Activated T-helper 1 cell treated with anti-CD3 and anti-CD28 coated beads, Interleukin-12 subunit alpha, Interleukin-12 subunit beta, Interleukin-2, Interleukin-4 antibody, amounts not matched to agents 30 ng/mL and 10 ng/mL and 1 ng/mL, durations not matched to agents 14 hours and 24 hours and 36 hours (primary cell): ENCODE measurements at regions of chr2 and their contacts with region 1.

Region 1: GRCh38 chr2:68925295-68925896 is 27.3 kb downstream of the GKN2 start:
- DNase-seq: peak; percentile 34
- H3K4me3 Mint-ChIP-seq: no peak overlapping the region
- H3K27ac Mint-ChIP-seq: no peak overlapping the region
- H3K4me1 Mint-ChIP-seq: peaks cover 12% of the 10 kb centered on the region
- H3K27me3 Mint-ChIP-seq: peaks cover 18% of the 10 kb centered on the region

Region 2: GRCh38 chr2:68487773-68488355 is 437.5 kb before region 1 on chr2:
- intact Hi-C with region 1: loop called (anchors 1 kb)
- DNase-seq: no peak
- H3K4me3 Mint-ChIP-seq: no peak overlapping the region
- H3K27ac Mint-ChIP-seq: no peak overlapping the region
- H3K4me1 Mint-ChIP-seq: peaks cover 6% of the 10 kb centered on the region
- H3K27me3 Mint-ChIP-seq: peaks cover 4% of the 10 kb centered on the region

Region 3: DNA sequence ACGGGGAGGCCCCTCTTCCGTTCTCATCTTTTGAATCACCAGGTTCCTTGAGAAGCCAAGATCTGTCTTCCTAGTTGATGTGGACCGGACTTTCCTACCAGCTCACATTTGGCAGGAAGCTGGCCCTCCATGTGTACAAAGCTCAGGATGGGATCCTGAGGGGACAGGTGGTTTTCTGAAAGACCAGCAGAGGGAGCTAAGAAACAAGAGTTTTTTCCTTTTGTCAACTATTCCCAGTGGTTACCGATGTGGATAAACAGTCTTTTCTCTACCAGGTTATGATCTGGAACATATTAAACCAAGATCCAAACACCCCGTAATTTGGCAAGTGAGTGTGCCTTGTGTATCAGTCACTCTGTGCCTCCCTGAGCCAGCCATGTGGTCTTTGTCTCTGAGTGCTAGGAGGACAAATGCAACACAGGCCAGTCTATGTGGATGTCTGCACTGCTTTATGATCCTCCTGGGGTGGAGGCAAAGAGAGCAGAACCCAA is 215.9 kb before region 1 on chr2:
- intact Hi-C with region 1: loop called (anchors 1 kb)
- DNase-seq: no peak
- H3K4me3 Mint-ChIP-seq: no peak overlapping the region
- H3K27ac Mint-ChIP-seq: no peak overlapping the region
- H3K4me1 Mint-ChIP-seq: peaks cover 36% of the 10 kb centered on the region
- H3K27me3 Mint-ChIP-seq: peaks cover 6% of the 10 kb centered on the region

Region 4: GRCh38 chr2:68751397-68752339 is 173.7 kb before region 1 on chr2:
- intact Hi-C with region 1: loop called (anchors 1 kb)
- DNase-seq: peak; percentile 78
- H3K4me3 Mint-ChIP-seq: peak overlapping the region; percentile 38
- H3K27ac Mint-ChIP-seq: peak overlapping the region; percentile 84
- H3K4me1 Mint-ChIP-seq: peaks cover 91% of the 10 kb centered on the region
- H3K27me3 Mint-ChIP-seq: no peaks in the 10 kb centered on the region

Region 5: GRCh38 chr2:69131983-69132675 is 206.7 kb after region 1 on chr2:
- intact Hi-C with region 1: no loop called
- DNase-seq: no peak
- H3K4me3 Mint-ChIP-seq: no peak overlapping the region
- H3K27ac Mint-ChIP-seq: no peak overlapping the region
- H3K4me1 Mint-ChIP-seq: no peaks in the 10 kb centered on the region
- H3K27me3 Mint-ChIP-seq: peaks cover 9% of the 10 kb centered on the region